ENCODE measurements at regions of chr12 and their contacts with region 1.

Region 1: DNA sequence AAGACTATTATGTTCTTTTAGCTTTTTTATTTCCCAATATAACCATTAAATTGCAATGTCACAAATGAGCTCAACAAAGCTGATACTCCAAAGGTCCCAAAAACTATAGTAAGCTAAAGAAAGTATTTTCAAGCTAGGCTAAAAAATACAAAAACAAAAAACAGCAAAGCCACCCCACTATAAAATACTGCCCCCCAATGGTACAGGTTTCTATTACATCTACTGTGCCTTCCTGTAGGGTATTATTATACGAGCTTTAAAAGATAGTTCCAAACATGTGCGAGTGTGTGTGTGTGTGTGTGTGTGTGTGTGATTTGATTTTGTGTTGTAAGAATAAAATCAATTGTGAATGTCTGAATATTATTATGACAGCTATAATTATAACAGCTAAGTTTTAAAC is 1.1 kb downstream of the IFNG start:
- DNase-seq: peak; percentile 37 to 63 (median 53)
- H3K4me3 ChIP-seq: no peak overlapping the region
- H3K4me3 Mint-ChIP-seq: peak overlapping the region; percentile 1 to 75 (median 58)
- H3K27ac ChIP-seq: no peak overlapping the region
- H3K27ac Mint-ChIP-seq: peak overlapping the region in 4 of 7 donors; percentile 13 to 66 (median 42)
- H3K4me1 ChIP-seq: peaks cover 42% of the 10 kb centered on the region
- H3K4me1 Mint-ChIP-seq: peaks cover 14 to 47% (median 28%) of the 10 kb centered on the region in 4 donors
- H3K27me3 ChIP-seq: no peaks in the 10 kb centered on the region
- H3K27me3 Mint-ChIP-seq: no peaks in the 10 kb centered on the region

Region 2: GRCh38 chr12:67355578-67356379 is 802.7 kb before region 1 on chr12:
- CTCF ChIA-PET with region 1: interaction called, 26 read pairs
- POLR2A ChIA-PET with region 1: no interaction called
- intact Hi-C with region 1: no loop called
- DNase-seq: peak; percentile 37 to 55 (median 52)
- H3K4me3 ChIP-seq: no peak overlapping the region
- H3K4me3 Mint-ChIP-seq: peak overlapping the region in 4 of 8 donors; percentile 39 to 63 (median 48)
- H3K27ac ChIP-seq: no peak overlapping the region
- H3K27ac Mint-ChIP-seq: peak overlapping the region in 2 of 7 donors; percentile 3 to 27
- H3K4me1 ChIP-seq: peaks cover 12% of the 10 kb centered on the region
- H3K4me1 Mint-ChIP-seq: peaks cover 7 to 16% (median 10%) of the 10 kb centered on the region in 4 donors
- H3K27me3 ChIP-seq: no peaks in the 10 kb centered on the region
- H3K27me3 Mint-ChIP-seq: no peaks in the 10 kb centered on the region

Region 3: DNA sequence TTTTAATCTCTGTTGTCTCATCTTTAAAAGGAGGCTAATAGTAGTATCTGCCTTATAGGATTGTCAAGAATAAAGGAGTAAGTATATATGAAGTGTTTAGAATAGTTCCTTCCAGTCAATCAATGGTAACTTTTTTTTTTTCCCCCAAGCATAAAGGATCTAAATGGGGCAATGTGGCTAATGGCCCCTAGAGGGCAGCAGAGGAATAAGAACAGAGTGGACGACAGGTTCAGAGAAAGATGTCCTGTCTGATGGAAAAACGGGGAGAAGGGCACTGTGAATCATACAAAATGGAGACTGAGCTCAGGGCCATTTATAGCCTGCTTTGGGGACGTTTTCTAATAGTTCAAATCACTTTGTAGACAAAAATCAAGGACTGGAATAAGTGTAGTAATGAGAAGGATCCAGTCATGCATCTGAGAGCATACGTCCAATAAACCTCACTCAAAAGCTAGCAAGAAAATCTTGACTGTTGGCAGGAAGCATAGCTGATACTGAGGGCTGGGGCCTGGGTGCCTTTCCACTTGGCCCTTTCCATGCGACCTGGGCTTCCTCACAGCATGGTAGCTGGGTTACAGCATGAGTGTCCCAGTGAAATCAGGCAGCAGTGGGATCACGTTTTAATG is 117.9 kb before region 1 on chr12:
- CTCF ChIA-PET with region 1: interaction called, 61 read pairs
- POLR2A ChIA-PET with region 1: interaction called, 13 read pairs
- intact Hi-C with region 1: loop called (anchors 1 kb)
- DNase-seq: peak; percentile 60 to 69 (median 65)
- H3K4me3 ChIP-seq: no peak overlapping the region
- H3K4me3 Mint-ChIP-seq: peak overlapping the region in 4 of 8 donors; percentile 2 to 29 (median 16)
- H3K27ac ChIP-seq: no peak overlapping the region
- H3K27ac Mint-ChIP-seq: peak overlapping the region in 5 of 7 donors; percentile 2 to 82 (median 34)
- H3K4me1 ChIP-seq: peaks cover 12% of the 10 kb centered on the region
- H3K4me1 Mint-ChIP-seq: peaks cover 12 to 19% (median 16%) of the 10 kb centered on the region in 4 donors
- H3K27me3 ChIP-seq: no peaks in the 10 kb centered on the region
- H3K27me3 Mint-ChIP-seq: no peaks in the 10 kb centered on the region

Region 4: DNA sequence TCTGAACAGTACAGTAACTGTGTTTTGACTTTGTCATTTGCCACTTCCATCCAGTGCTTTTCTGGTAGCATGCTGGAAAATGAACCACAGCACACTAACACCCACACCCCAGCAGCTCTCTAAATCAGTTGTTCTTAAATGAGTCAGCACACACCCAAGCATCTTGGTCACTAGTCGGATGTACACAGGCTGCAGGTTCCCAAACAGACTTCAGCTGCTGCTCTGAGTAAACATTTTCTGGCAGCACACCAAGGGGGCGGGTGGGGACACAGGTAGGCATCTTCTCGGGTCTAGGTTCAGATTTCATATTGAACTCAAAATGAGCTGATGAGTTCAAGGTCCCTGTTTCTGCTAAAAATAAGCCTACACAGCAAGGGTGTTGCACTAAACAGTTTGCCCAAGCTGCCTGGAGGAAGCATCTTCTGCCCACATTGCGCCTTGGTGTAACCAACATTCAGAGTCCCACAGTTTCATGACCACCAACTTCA is 38.7 kb before region 1 on chr12:
- CTCF ChIA-PET with region 1: interaction called, 104 read pairs
- POLR2A ChIA-PET with region 1: interaction called, 4 read pairs
- intact Hi-C with region 1: no loop called
- DNase-seq: peak in 2 of 5 donors; percentile 18 to 60
- H3K4me3 ChIP-seq: no peak overlapping the region
- H3K4me3 Mint-ChIP-seq: peak overlapping the region in 6 of 8 donors; percentile 8 to 52 (median 26)
- H3K27ac ChIP-seq: no peak overlapping the region
- H3K27ac Mint-ChIP-seq: peak overlapping the region; percentile 6 to 70 (median 47)
- H3K4me1 ChIP-seq: peaks cover 45% of the 10 kb centered on the region
- H3K4me1 Mint-ChIP-seq: peaks cover 23 to 32% (median 24%) of the 10 kb centered on the region in 4 donors
- H3K27me3 ChIP-seq: no peaks in the 10 kb centered on the region
- H3K27me3 Mint-ChIP-seq: peaks cover 0 to 1% of the 10 kb centered on the region in 2 donors

Region 5: GRCh38 chr12:68175557-68176061 is 17.2 kb after region 1 on chr12:
- CTCF ChIA-PET with region 1: interaction called, 18 read pairs
- POLR2A ChIA-PET with region 1: interaction called, 9 read pairs
- intact Hi-C with region 1: loop called (anchors 2 kb)
- DNase-seq: peak; percentile 81 to 90 (median 82)
- H3K4me3 ChIP-seq: peak overlapping the region in 1 of 2 donors; percentile 27
- H3K4me3 Mint-ChIP-seq: peak overlapping the region; percentile 71 to 90 (median 78)
- H3K27ac ChIP-seq: peak overlapping the region; percentile 58
- H3K27ac Mint-ChIP-seq: peak overlapping the region; percentile 90 to 97 (median 92)
- H3K4me1 ChIP-seq: peaks cover 49% of the 10 kb centered on the region
- H3K4me1 Mint-ChIP-seq: peaks cover 37 to 61% (median 49%) of the 10 kb centered on the region in 4 donors
- H3K27me3 ChIP-seq: no peaks in the 10 kb centered on the region
- H3K27me3 Mint-ChIP-seq: no peaks in the 10 kb centered on the region

Region 6: DNA sequence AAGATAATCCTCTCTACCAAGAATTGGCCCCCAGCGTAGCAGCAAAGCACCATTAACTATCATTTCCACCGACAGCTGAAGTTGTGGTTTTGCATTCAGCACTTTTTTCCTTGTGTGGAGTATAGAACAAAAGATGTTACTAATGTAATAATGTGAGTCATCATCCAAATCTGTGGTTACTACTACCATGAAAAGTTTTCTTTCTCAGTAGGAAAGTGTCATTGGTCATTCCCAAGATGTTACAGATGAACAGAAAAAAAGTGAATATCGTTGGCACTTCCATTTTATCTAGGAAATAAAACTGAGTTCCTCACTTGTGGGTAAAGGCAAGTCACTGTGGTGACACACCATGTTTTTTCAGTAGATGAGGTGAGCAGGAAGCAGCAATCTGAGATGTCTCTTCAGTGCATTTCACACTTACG is 31.4 kb after region 1 on chr12:
- CTCF ChIA-PET with region 1: interaction called, 10 read pairs
- POLR2A ChIA-PET with region 1: interaction called, 3 read pairs
- intact Hi-C with region 1: no loop called
- DNase-seq: peak; percentile 35 to 70 (median 39)
- H3K4me3 ChIP-seq: no peak overlapping the region
- H3K4me3 Mint-ChIP-seq: peak overlapping the region; percentile 8 to 65 (median 45)
- H3K27ac ChIP-seq: peak overlapping the region; percentile 29
- H3K27ac Mint-ChIP-seq: peak overlapping the region; percentile 24 to 82 (median 75)
- H3K4me1 ChIP-seq: peaks cover 12% of the 10 kb centered on the region
- H3K4me1 Mint-ChIP-seq: peaks cover 9 to 18% (median 16%) of the 10 kb centered on the region in 4 donors
- H3K27me3 ChIP-seq: no peaks in the 10 kb centered on the region
- H3K27me3 Mint-ChIP-seq: no peaks in the 10 kb centered on the region

Measured in CD4-positive, alpha-beta memory T cell (primary cell).